ENCODE measurements at regions of chr17 and their contacts with region 1.

Region 1: GRCh38 chr17:10907370-10907769 is 69.5 kb upstream of the PIRT start:
- DNase-seq: no peak
- H3K4me3 ChIP-seq: no peak overlapping the region
- H3K27ac ChIP-seq: no peak overlapping the region
- H3K4me1 ChIP-seq: no peaks in the 10 kb centered on the region
- H3K27me3 ChIP-seq: no peaks in the 10 kb centered on the region
- CTCF ChIP-seq: no peak
- POLR2A ChIP-seq: no peak

Region 2: DNA sequence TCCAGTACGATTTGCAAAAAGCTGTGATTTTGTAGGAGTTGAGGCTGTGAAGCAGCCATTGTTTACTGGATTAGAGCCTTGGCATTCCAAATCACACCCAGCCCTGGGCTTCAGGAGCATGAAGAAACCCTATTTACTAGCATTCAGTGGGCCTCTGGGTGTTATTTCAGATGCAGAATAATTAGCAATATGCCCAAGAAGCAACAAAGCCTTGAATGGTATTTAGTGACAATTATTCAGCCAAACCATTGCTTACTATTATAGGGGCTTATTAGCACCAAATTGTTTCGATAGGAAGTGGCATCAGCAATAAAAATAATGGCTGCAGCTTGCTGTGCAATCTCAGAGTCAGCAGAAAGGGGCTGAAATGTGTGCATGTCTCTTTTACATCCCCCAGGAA is 167.1 kb after region 1 on chr17:
- intact Hi-C with region 1: loop called (anchors 10 kb)
- DNase-seq: no peak
- H3K4me3 ChIP-seq: no peak overlapping the region
- H3K27ac ChIP-seq: no peak overlapping the region
- H3K4me1 ChIP-seq: no peaks in the 10 kb centered on the region
- H3K27me3 ChIP-seq: no peaks in the 10 kb centered on the region
- CTCF ChIP-seq: no peak
- POLR2A ChIP-seq: no peak